ENCODE measurements at regions of chr16 and their contacts with region 1.

Region 1: DNA sequence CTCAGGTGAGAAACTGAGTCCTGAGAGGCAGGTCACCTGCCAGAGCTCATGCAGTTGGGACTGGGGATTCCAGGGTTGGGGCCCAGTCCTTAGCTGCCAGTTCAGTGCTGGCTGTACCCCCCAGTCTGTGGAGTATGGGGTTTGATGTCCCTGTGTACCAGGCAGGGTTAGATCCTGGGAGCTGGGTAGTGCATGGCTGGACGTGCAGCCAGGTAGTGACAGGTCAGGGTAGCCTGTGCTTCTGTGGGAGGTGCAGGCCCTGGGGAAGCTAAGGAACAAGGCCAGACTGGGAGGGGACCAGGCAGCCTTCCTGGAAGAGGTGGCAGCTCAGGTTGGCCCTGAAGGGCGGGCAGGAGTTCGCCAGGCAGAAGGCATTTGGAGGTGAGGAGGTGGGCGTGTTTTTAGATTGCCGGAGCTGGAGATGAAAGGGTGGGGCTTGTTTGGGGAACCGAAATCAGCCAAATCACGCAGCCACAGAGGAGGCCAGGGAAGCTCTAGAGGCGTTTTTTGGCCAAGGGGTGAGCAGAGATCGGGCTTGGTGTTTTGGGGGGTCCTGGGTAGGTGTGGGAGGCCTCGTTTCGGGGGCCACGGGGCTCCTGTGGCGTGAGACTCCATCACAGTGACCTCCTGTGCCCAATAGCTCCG is 7.5 kb downstream of the ADCY7 start:
- DNase-seq: peak; percentile 24 to 69 (median 35)
- H3K4me3 ChIP-seq: peak overlapping the region; percentile 77 to 90
- H3K4me3 Mint-ChIP-seq: peak overlapping the region; percentile 90 to 98 (median 92)
- H3K27ac ChIP-seq: peak overlapping the region; percentile 71
- H3K27ac Mint-ChIP-seq: peak overlapping the region; percentile 96 to 99 (median 98)
- H3K4me1 ChIP-seq: peaks cover 98% of the 10 kb centered on the region
- H3K4me1 Mint-ChIP-seq: peaks cover 59 to 100% (median 89%) of the 10 kb centered on the region in 4 donors
- H3K27me3 ChIP-seq: no peaks in the 10 kb centered on the region
- H3K27me3 Mint-ChIP-seq: no peaks in the 10 kb centered on the region

Region 2: GRCh38 chr16:50015631-50016030 is 258.2 kb before region 1 on chr16:
- CTCF ChIA-PET with region 1: no interaction called
- POLR2A ChIA-PET with region 1: no interaction called
- intact Hi-C with region 1: no loop called
- DNase-seq: no peak
- H3K4me3 ChIP-seq: no peak overlapping the region
- H3K4me3 Mint-ChIP-seq: no peak overlapping the region
- H3K27ac ChIP-seq: no peak overlapping the region
- H3K27ac Mint-ChIP-seq: no peak overlapping the region
- H3K4me1 ChIP-seq: no peaks in the 10 kb centered on the region
- H3K4me1 Mint-ChIP-seq: peaks cover 0 to 3% (median 0%) of the 10 kb centered on the region in 4 donors
- H3K27me3 ChIP-seq: no peaks in the 10 kb centered on the region
- H3K27me3 Mint-ChIP-seq: peaks cover 2 to 3% of the 10 kb centered on the region in 2 donors

Region 3: GRCh38 chr16:50202926-50203624 is 70.7 kb before region 1 on chr16:
- CTCF ChIA-PET with region 1: no interaction called
- POLR2A ChIA-PET with region 1: no interaction called
- intact Hi-C with region 1: no loop called
- DNase-seq: no peak
- H3K4me3 ChIP-seq: no peak overlapping the region
- H3K4me3 Mint-ChIP-seq: peak overlapping the region in 2 of 8 donors; percentile 27 to 41
- H3K27ac ChIP-seq: no peak overlapping the region
- H3K27ac Mint-ChIP-seq: peak overlapping the region; percentile 5 to 89 (median 71)
- H3K4me1 ChIP-seq: peaks cover 27% of the 10 kb centered on the region
- H3K4me1 Mint-ChIP-seq: peaks cover 32 to 64% (median 55%) of the 10 kb centered on the region in 4 donors
- H3K27me3 ChIP-seq: no peaks in the 10 kb centered on the region
- H3K27me3 Mint-ChIP-seq: no peaks in the 10 kb centered on the region

Region 4: GRCh38 chr16:50224286-50224685 is 49.5 kb before region 1 on chr16:
- CTCF ChIA-PET with region 1: no interaction called
- POLR2A ChIA-PET with region 1: no interaction called
- intact Hi-C with region 1: no loop called
- DNase-seq: no peak
- H3K4me3 ChIP-seq: no peak overlapping the region
- H3K4me3 Mint-ChIP-seq: no peak overlapping the region
- H3K27ac ChIP-seq: no peak overlapping the region
- H3K27ac Mint-ChIP-seq: peak overlapping the region in 1 of 7 donors; percentile 2
- H3K4me1 ChIP-seq: no peaks in the 10 kb centered on the region
- H3K4me1 Mint-ChIP-seq: peaks cover 0 to 1% (median 0%) of the 10 kb centered on the region in 4 donors
- H3K27me3 ChIP-seq: no peaks in the 10 kb centered on the region
- H3K27me3 Mint-ChIP-seq: no peaks in the 10 kb centered on the region

Region 5: DNA sequence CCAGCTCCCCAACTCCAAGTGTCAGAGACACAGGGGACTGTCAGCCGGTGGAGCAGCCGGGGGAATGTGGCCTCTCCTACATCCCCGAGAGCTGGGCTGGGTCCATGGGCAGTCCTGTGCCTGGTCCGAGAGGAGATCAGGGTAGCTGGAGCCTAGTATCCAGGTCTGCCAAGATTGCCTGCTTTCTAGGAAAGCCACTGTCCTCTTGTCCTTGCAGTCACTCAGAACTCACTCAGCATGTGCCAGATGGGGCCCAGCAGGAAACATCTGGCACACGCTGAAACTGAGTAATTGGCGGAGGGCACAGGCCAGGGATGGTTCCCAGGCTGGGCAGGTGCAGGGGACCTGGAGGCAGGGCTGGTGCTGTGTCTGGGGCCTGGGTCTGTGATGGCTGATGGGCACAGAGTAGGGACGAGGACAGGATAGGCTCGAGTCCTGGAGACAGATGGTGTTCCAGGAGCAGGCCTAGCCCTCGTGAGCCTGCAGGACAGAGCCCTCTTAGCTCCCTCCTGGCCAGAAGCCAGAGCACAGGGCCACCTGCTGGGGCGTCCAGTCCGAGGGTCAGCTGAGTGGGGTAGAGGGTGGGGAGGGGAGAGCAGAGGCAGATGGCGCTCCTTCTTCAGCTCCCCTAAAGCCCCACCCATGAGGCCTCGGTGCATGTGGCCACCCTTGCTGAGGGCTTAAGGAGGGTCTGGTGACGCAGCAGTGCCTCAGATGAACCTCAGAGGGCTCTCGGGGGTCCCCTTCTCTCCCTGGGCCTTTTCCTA is 23.7 kb after region 1 on chr16:
- CTCF ChIA-PET with region 1: interaction called, 4 read pairs
- POLR2A ChIA-PET with region 1: interaction called, 14 read pairs
- intact Hi-C with region 1: no loop called
- DNase-seq: no peak
- H3K4me3 ChIP-seq: no peak overlapping the region
- H3K4me3 Mint-ChIP-seq: no peak overlapping the region
- H3K27ac ChIP-seq: no peak overlapping the region
- H3K27ac Mint-ChIP-seq: peak overlapping the region in 3 of 7 donors; percentile 25 to 66 (median 27)
- H3K4me1 ChIP-seq: no peaks in the 10 kb centered on the region
- H3K4me1 Mint-ChIP-seq: peaks cover 3 to 15% (median 5%) of the 10 kb centered on the region in 4 donors
- H3K27me3 ChIP-seq: no peaks in the 10 kb centered on the region
- H3K27me3 Mint-ChIP-seq: no peaks in the 10 kb centered on the region

Region 6: DNA sequence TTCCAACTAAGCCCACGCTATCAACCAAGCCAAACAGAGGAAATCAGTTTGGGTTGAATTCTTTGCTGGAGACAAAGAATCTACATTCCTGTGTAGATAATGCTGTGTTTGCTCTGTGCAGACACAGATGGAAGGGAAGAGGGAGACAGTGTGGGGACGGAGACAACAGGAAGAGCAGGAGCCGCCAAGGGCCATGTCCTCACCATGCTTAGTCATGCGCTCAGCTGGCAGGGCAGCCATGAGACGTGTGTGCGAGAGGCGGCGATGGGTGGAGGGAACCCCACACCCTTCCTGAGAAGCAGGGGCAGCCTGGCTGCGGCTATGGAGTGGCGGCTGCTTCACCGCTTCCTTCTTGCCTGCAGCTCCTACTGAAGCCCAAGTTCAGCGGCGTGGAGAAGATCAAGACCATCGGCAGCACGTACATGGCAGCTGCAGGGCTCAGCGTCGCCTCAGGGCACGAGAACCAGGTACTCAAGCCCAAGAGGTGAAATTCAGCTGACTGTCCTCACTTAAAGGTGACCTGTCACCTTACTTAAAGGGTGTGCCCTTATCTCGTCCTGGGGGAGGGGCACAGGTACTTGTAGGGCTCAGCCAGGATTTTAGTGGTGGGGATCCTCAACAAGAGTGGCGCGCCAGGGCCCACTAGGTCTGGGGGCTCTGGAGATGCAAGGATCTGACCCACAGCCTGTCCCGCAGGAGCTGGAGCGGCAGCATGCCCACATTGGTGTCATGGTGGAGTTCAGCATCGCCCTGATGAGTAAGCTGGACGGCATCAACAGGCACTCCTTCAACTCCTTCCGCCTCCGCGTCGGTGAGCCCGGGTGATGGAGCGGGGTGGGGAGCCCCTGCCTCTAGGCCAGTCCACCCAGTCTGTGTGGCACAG is 40.0 kb after region 1 on chr16:
- CTCF ChIA-PET with region 1: interaction called, 4 read pairs
- POLR2A ChIA-PET with region 1: interaction called, 72 read pairs
- intact Hi-C with region 1: loop called (anchors 5 kb)
- DNase-seq: peak; percentile 26 to 67 (median 44)
- H3K4me3 ChIP-seq: no peak overlapping the region
- H3K4me3 Mint-ChIP-seq: peak overlapping the region in 5 of 8 donors; percentile 3 to 76 (median 17)
- H3K27ac ChIP-seq: no peak overlapping the region
- H3K27ac Mint-ChIP-seq: peak overlapping the region; percentile 62 to 90 (median 85)
- H3K4me1 ChIP-seq: peaks cover 25% of the 10 kb centered on the region
- H3K4me1 Mint-ChIP-seq: peaks cover 15 to 49% (median 29%) of the 10 kb centered on the region in 4 donors
- H3K27me3 ChIP-seq: no peaks in the 10 kb centered on the region
- H3K27me3 Mint-ChIP-seq: no peaks in the 10 kb centered on the region

Region 7: GRCh38 chr16:50338371-50339231 is 64.8 kb after region 1 on chr16:
- CTCF ChIA-PET with region 1: no interaction called
- POLR2A ChIA-PET with region 1: interaction called, 63 read pairs
- intact Hi-C with region 1: no loop called
- DNase-seq: peak; percentile 51 to 86 (median 73)
- H3K4me3 ChIP-seq: no peak overlapping the region
- H3K4me3 Mint-ChIP-seq: peak overlapping the region; percentile 2 to 72 (median 49)
- H3K27ac ChIP-seq: peak overlapping the region; percentile 79
- H3K27ac Mint-ChIP-seq: peak overlapping the region; percentile 88 to 99 (median 95)
- H3K4me1 ChIP-seq: peaks cover 34% of the 10 kb centered on the region
- H3K4me1 Mint-ChIP-seq: peaks cover 25 to 61% (median 44%) of the 10 kb centered on the region in 4 donors
- H3K27me3 ChIP-seq: no peaks in the 10 kb centered on the region
- H3K27me3 Mint-ChIP-seq: no peaks in the 10 kb centered on the region

Region 8: GRCh38 chr16:50354629-50355456 is 81.0 kb after region 1 on chr16:
- CTCF ChIA-PET with region 1: interaction called, 155 read pairs
- POLR2A ChIA-PET with region 1: interaction called, 8 read pairs
- intact Hi-C with region 1: no loop called
- DNase-seq: peak in 4 of 5 donors; percentile 42 to 61 (median 54)
- H3K4me3 ChIP-seq: no peak overlapping the region
- H3K4me3 Mint-ChIP-seq: no peak overlapping the region
- H3K27ac ChIP-seq: no peak overlapping the region
- H3K27ac Mint-ChIP-seq: peak overlapping the region in 6 of 7 donors; percentile 0 to 89 (median 41)
- H3K4me1 ChIP-seq: peaks cover 3% of the 10 kb centered on the region
- H3K4me1 Mint-ChIP-seq: peaks cover 10 to 36% (median 23%) of the 10 kb centered on the region in 4 donors
- H3K27me3 ChIP-seq: no peaks in the 10 kb centered on the region
- H3K27me3 Mint-ChIP-seq: no peaks in the 10 kb centered on the region

Region 9: GRCh38 chr16:50681021-50681885 is 407.4 kb after region 1 on chr16 and contains the start of gene SNX20:
- CTCF ChIA-PET with region 1: no interaction called
- POLR2A ChIA-PET with region 1: interaction called, 13 read pairs
- intact Hi-C with region 1: loop called (anchors 5 kb)
- DNase-seq: peak; percentile 69 to 82 (median 76)
- H3K4me3 ChIP-seq: peak within 1 kb of the TSS; percentile 45 to 93
- H3K4me3 Mint-ChIP-seq: peak within 1 kb of the TSS; percentile 83 to 97 (median 94)
- H3K27ac ChIP-seq: peak within 1 kb of the TSS; percentile 90
- H3K27ac Mint-ChIP-seq: peak within 1 kb of the TSS; percentile 87 to 99 (median 97)
- H3K4me1 ChIP-seq: peaks cover 93% of the 10 kb centered on the region
- H3K4me1 Mint-ChIP-seq: peaks cover 69 to 95% (median 84%) of the 10 kb centered on the region in 4 donors
- H3K27me3 ChIP-seq: no peaks in the 10 kb centered on the region
- H3K27me3 Mint-ChIP-seq: no peaks in the 10 kb centered on the region
- total RNA-seq, gene SNX20: 88.9 to 90.1 TPM